ENCODE measurements at regions of chr5 and their contacts with region 1.

Region 1: DNA sequence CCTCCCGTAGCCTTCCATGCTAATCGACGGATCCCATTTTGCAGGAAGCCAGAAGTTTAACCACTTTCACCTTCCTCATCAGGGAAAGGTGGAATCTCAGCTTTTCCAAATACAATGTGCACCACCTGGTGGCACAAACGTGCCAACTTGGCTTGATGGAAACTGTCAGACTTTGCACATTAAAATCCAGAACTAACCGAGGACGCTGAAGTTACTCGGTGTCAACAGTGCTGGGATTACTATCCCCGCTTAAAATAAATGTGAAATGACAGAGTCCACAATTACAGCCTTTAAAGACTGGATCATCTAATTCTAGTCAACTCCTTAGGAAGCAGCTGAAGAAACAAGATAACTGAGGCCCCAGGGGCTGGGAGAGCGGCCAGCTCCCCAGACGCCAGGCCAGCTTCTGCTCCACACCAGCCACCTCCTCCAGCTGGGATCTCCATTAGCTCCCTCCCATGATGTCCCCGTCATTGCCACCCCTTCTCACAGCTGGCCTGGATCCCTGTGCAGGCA is 50.1 kb upstream of the RETREG1 start:
- DNase-seq: peak in 5 of 9 donors; percentile 9 to 54 (median 38)
- ATAC-seq: peak; percentile 52
- H3K4me3 ChIP-seq: no peak overlapping the region
- H3K4me3 Mint-ChIP-seq: peak overlapping the region in 4 of 10 donors; percentile 55 to 78 (median 58)
- H3K27ac ChIP-seq: no peak overlapping the region
- H3K27ac Mint-ChIP-seq: peak overlapping the region in 4 of 9 donors; percentile 13 to 84 (median 64)
- H3K4me1 ChIP-seq: no peaks in the 10 kb centered on the region
- H3K4me1 Mint-ChIP-seq: peaks cover 0 to 58% (median 26%) of the 10 kb centered on the region in 7 donors
- H3K27me3 ChIP-seq: no peaks in the 10 kb centered on the region
- H3K27me3 Mint-ChIP-seq: no peaks in the 10 kb centered on the region

Region 2: DNA sequence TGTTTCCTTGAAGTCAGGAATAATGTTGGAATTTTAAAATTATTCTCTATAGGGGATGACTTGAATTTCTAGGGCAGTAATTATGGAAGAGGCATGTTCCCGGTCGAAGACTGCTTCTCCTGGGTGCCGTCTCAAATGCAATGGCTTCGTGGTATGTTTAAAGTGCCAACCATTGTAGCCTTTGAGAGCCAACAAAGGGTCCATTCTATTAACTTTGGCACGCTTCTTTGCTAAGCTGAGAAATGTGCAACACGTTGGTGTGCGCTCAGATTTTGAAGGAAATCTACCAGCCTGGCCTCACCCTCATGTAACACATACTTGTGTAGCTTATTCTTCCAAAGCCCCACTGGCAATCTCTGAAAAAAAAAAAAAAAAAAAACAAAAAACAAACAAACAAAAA is 1574.1 kb before region 1 on chr5:
- CTCF ChIA-PET with region 1: no interaction called
- POLR2A ChIA-PET with region 1: no interaction called
- intact Hi-C with region 1: no loop called
- DNase-seq: no peak
- ATAC-seq: no peak
- H3K4me3 ChIP-seq: no peak overlapping the region
- H3K4me3 Mint-ChIP-seq: no peak overlapping the region
- H3K27ac ChIP-seq: no peak overlapping the region
- H3K27ac Mint-ChIP-seq: no peak overlapping the region
- H3K4me1 ChIP-seq: no peaks in the 10 kb centered on the region
- H3K4me1 Mint-ChIP-seq: no peaks in the 10 kb centered on the region
- H3K27me3 ChIP-seq: no peaks in the 10 kb centered on the region
- H3K27me3 Mint-ChIP-seq: peaks cover 0 to 16% (median 4%) of the 10 kb centered on the region in 5 donors

Region 3: DNA sequence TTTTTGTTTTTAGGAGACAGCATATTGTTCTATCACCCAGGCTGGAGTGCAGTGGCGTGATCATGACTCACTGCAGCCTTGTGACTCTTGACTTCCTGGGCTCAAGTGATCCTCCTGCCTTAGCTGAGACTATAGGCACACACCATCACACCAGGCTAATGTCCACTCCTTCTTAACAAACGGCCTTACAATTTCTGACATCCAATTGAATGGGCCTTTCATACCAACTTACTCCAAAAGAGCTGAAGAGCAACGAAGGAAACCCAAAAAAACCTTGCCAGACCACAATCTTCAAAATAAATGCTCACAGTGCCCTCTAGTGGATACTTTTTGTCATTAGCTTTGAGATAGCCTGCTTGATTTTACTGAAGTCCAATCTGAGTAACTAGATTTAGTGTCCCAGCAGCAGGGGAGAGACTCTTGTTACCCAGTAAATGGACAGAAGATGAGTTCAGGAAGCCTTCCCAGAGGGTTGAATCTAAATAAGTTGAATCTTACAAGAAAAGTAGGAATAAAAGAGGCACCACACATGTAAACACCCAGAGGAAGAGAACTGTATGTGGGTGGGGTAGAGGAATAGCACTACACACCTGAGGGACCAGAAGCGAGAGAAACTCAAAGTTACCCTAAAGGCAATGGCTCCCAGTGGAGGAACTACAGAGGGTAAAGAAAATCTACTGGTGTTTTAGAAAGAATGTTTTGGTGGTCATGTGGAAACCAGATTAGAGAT is 210.7 kb before region 1 on chr5:
- CTCF ChIA-PET with region 1: interaction called, 9 read pairs
- POLR2A ChIA-PET with region 1: interaction called, 4 read pairs
- intact Hi-C with region 1: loop called (anchors 2 to 5 kb)
- DNase-seq: peak in 7 of 9 donors; percentile 25 to 70 (median 59)
- ATAC-seq: peak; percentile 78
- H3K4me3 ChIP-seq: no peak overlapping the region
- H3K4me3 Mint-ChIP-seq: peak overlapping the region; percentile 6 to 80 (median 63)
- H3K27ac ChIP-seq: peak overlapping the region; percentile 28
- H3K27ac Mint-ChIP-seq: peak overlapping the region; percentile 3 to 84 (median 65)
- H3K4me1 ChIP-seq: peaks cover 9 to 20% of the 10 kb centered on the region in 2 donors
- H3K4me1 Mint-ChIP-seq: peaks cover 34 to 78% (median 64%) of the 10 kb centered on the region in 7 donors
- H3K27me3 ChIP-seq: no peaks in the 10 kb centered on the region
- H3K27me3 Mint-ChIP-seq: no peaks in the 10 kb centered on the region

Region 4: DNA sequence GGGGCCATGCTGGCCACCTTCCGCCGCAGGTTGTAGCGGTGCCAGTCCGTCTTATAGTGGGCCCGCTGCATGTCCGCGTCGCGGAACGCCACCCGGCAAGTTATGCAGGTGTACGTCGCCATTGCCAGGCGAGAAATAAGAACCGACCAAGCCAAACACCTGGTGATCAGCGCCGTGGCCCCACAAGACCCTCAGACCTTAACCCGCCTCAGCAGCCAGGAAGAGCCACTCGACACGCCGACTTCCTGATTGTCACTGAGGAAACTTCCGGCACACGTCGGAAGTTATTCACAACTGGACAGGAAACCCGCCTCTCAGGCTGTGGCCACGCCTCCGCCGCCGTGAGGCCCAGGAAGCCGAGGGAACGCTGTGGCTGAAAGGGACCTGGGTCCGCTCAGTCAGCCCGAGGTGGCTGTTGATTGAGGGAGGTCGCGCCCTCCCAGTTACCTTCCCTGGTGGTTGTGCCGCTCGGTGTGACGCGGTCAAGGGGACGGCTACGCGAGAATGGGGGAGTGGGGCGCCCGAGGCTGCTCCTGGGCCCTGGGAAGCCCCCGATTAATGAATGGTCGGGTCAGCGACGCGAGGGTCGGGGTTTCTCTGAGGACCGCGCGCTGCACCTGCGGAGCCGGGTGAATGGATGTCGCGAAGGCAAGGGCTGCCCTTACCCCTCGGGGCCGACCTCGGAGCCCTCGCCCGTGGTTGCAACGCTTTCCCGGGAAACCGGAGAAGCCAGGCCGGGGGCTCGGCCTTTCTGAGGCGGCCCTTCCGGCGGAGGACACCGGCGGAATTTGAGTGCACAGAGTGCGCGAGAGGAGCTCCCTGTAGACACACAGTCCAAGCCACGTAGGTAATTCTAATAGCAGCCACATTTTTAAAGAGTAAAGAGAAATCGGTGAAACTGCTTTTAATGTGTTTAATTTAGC is 201.1 kb before region 1 on chr5 and contains the start of gene ZNF622:
- CTCF ChIA-PET with region 1: no interaction called
- POLR2A ChIA-PET with region 1: interaction called, 4 read pairs
- intact Hi-C with region 1: loop called in 1 of 2 experiments (anchors 2 kb)
- DNase-seq: peak; percentile 72 to 89 (median 86)
- ATAC-seq: peak; percentile 96
- H3K4me3 ChIP-seq: peak within 1 kb of the TSS; percentile 88
- H3K4me3 Mint-ChIP-seq: peak within 1 kb of the TSS; percentile 90 to 100 (median 97)
- H3K27ac ChIP-seq: peak within 1 kb of the TSS; percentile 87
- H3K27ac Mint-ChIP-seq: peak within 1 kb of the TSS; percentile 94 to 99 (median 97)
- H3K4me1 ChIP-seq: peaks cover 44 to 55% of the 10 kb centered on the region in 2 donors
- H3K4me1 Mint-ChIP-seq: peaks cover 61 to 98% (median 82%) of the 10 kb centered on the region in 7 donors
- H3K27me3 ChIP-seq: no peaks in the 10 kb centered on the region
- H3K27me3 Mint-ChIP-seq: no peaks in the 10 kb centered on the region
- total RNA-seq, gene ZNF622: 31.8 to 40.7 (median 36.0) TPM

Region 5: DNA sequence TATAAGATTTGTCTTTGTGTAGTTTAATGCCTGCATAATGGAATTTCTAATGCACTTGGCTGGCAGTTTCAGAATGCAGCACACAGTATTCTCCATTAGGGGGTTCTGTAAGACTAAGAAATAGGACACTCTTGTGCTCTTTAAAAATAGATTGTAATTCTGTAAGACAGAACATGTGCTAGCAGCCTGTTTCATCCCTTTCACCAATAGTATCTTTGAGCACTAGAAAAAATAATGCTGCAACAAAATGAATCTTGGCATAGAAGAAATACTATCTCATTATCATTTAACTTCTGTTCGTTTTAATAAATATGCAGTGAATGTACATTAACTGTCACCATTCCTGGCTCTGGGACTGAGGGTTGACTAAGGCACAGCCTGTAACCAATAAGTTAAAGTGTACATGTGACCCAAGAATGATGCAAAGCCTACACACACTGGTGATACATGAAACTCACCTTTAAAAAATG is 177.6 kb before region 1 on chr5:
- CTCF ChIA-PET with region 1: interaction called, 16 read pairs
- POLR2A ChIA-PET with region 1: no interaction called
- intact Hi-C with region 1: loop called (anchors 1 kb)
- DNase-seq: peak in 5 of 9 donors; percentile 18 to 53 (median 46)
- ATAC-seq: peak; percentile 86
- H3K4me3 ChIP-seq: no peak overlapping the region
- H3K4me3 Mint-ChIP-seq: no peak overlapping the region
- H3K27ac ChIP-seq: no peak overlapping the region
- H3K27ac Mint-ChIP-seq: peak overlapping the region in 4 of 9 donors; percentile 1 to 60 (median 41)
- H3K4me1 ChIP-seq: no peaks in the 10 kb centered on the region
- H3K4me1 Mint-ChIP-seq: peaks cover 9 to 86% (median 71%) of the 10 kb centered on the region in 7 donors
- H3K27me3 ChIP-seq: no peaks in the 10 kb centered on the region
- H3K27me3 Mint-ChIP-seq: no peaks in the 10 kb centered on the region

Region 6: DNA sequence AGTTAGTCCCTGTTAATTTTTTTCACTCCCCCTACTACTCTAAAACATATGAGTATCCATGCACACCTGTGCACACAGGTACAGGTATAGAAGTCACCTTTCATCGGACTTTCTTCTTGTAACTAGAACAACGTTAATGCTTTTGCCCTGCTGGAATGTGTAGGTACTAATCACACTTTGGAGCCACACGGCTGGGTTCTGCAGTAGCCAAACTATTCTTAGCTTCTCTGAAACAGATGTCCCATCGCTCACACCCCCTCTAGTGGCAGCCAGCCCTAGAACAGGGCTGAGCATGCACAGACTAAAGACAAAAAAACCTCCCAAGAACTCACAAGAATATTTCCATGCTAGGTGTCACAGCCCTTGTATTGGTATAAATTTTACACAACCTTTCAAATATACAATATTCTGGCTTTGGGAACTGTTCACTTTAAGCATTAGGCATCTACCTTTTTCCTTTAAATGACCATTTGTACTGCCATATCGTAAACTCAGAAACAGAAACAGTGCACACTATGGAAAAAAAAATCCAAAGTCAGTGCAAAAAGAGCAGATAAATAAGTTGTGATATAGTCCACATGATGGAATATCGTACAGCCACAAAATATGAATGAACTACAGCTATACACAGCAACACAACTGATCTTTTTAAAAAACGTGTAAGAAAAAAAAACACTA is 114.1 kb before region 1 on chr5:
- CTCF ChIA-PET with region 1: interaction called, 3 read pairs
- POLR2A ChIA-PET with region 1: no interaction called
- intact Hi-C with region 1: loop called (anchors 1 kb)
- DNase-seq: peak in 7 of 9 donors; percentile 34 to 54 (median 44)
- ATAC-seq: peak; percentile 80
- H3K4me3 ChIP-seq: no peak overlapping the region
- H3K4me3 Mint-ChIP-seq: peak overlapping the region in 2 of 10 donors; percentile 4 to 7
- H3K27ac ChIP-seq: no peak overlapping the region
- H3K27ac Mint-ChIP-seq: peak overlapping the region in 5 of 9 donors; percentile 7 to 33 (median 14)
- H3K4me1 ChIP-seq: no peaks in the 10 kb centered on the region
- H3K4me1 Mint-ChIP-seq: peaks cover 19 to 86% (median 71%) of the 10 kb centered on the region in 7 donors
- H3K27me3 ChIP-seq: no peaks in the 10 kb centered on the region
- H3K27me3 Mint-ChIP-seq: no peaks in the 10 kb centered on the region

Region 7: DNA sequence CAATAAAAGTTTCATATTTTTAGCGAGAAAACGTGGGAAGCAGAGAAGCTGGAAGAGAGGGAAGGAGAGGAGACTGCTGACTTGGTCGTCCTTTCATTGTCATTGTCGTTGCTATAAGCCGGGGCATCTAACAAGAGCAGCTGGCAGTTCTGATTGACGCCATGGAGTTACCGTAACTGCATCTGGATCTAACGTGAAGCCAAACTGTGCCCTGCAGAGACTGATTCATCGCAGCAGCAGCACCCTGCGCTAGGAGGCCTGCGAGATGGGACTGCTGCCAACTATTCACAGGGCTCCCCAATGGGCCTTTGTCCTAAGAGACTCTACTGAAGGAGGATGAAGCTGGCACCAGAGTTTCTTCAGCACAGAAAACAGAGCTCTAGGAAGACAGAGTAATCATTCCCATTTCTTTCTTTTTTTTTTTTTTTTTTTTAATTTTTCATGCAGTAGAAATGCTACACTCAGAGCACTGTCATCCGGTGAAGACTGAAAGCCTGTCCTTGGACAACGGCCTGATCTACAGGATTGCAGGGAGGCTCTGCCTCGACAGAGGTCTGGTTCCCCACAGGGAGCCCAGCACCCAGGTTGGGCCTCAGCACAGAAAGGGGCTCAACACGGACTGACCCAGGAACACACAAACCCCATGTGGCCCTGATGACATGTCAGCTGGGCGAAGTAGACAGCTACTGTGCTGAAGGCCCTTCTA is 97.9 kb before region 1 on chr5:
- CTCF ChIA-PET with region 1: interaction called, 5 read pairs
- POLR2A ChIA-PET with region 1: interaction called, 3 read pairs
- intact Hi-C with region 1: loop called in 1 of 2 experiments (anchors 5 kb)
- DNase-seq: no peak
- ATAC-seq: no peak
- H3K4me3 ChIP-seq: no peak overlapping the region
- H3K4me3 Mint-ChIP-seq: no peak overlapping the region
- H3K27ac ChIP-seq: no peak overlapping the region
- H3K27ac Mint-ChIP-seq: peak overlapping the region in 5 of 9 donors; percentile 12 to 57 (median 44)
- H3K4me1 ChIP-seq: no peaks in the 10 kb centered on the region
- H3K4me1 Mint-ChIP-seq: peaks cover 14 to 82% (median 63%) of the 10 kb centered on the region in 7 donors
- H3K27me3 ChIP-seq: no peaks in the 10 kb centered on the region
- H3K27me3 Mint-ChIP-seq: no peaks in the 10 kb centered on the region

Measured in naive thymus-derived CD4-positive, alpha-beta T cell (primary cell).